ENCODE measurements at regions of chr3 and their contacts with region 1.

Region 1: DNA sequence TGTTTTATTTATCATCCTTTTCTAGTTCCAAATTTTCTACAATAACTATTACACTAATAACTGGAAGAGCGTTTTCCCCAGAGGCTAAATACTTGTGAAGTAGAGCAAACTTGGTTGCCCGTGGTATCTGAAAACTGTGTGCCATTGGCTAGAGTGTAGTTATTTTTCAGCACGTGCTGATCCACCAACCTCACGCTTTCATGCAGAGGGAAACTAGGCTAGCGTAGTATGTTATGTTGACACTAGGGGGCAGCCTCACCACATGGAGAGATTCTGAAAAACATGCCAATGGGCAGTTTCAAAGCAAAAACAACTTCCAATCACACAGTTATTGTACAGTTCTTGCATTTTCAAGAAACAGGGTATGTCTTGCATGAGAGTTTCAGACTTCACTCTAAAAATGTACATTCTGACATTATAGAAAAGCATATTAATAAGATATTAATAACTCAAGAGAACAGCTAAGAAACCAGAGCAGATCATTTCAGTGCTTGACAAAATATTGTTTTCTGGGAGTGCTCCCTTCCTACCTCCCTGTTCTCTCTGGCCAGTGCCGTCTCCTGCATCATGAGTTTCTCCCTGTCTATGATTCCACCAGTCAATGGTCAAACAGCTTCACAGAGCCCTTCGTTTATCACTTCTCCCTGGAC is 39.7 kb downstream of the SPATA12 start:
- DNase-seq: peak in 1 of 2 donors; percentile 72
- ATAC-seq: peak in 7 of 8 donors; percentile 60 to 86 (median 76)
- H3K4me3 ChIP-seq: no peak overlapping the region
- H3K27ac ChIP-seq: no peak overlapping the region
- H3K4me1 ChIP-seq: peaks cover 0 to 8% (median 0%) of the 10 kb centered on the region in 9 donors
- H3K27me3 ChIP-seq: no peaks in the 10 kb centered on the region
- CTCF ChIP-seq: peak; percentile 81 to 95 (median 91)

Region 2: GRCh38 chr3:57164657-57165573 is 64.7 kb after region 1 on chr3 and contains the start of gene IL17RD:
- intact Hi-C with region 1: loop called in 7 of 10 experiments (anchors 5 kb)
- DNase-seq: peak; percentile 83 to 88
- ATAC-seq: peak; percentile 76 to 92 (median 86)
- H3K4me3 ChIP-seq: peak within 1 kb of the TSS; percentile 64 to 95 (median 90)
- H3K27ac ChIP-seq: peak within 1 kb of the TSS in 9 of 10 donors; percentile 14 to 80 (median 63)
- H3K4me1 ChIP-seq: peaks cover 0 to 60% (median 36%) of the 10 kb centered on the region in 9 donors
- H3K27me3 ChIP-seq: peaks cover 0 to 80% (median 0%) of the 10 kb centered on the region in 7 donors
- CTCF ChIP-seq: no peak
- total RNA-seq, gene IL17RD: 3.3 to 15.6 (median 6.0) TPM

Region 3: DNA sequence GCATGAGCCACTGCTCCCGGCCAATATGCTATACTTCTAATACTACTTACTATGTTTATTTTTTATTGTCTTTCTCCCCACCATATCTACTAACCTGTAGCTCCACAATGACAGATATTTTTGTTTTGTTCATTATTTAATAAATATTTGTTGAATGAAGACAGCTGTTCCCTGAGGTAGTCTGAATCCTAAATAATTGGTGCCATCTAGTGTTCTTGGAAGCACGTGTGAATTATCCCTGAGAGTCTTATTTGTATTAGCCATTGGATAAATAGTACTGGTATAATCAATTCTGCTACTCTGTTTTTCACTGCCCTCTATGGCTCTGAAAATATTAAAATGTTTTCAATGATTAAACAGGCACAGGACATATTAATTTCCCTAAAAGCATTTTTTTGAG is 121.7 kb after region 1 on chr3:
- intact Hi-C with region 1: loop called (anchors 2 to 10 kb)
- DNase-seq: no peak
- ATAC-seq: no peak
- H3K4me3 ChIP-seq: no peak overlapping the region
- H3K27ac ChIP-seq: no peak overlapping the region
- H3K4me1 ChIP-seq: peaks cover 0 to 11% (median 5%) of the 10 kb centered on the region in 9 donors
- H3K27me3 ChIP-seq: no peaks in the 10 kb centered on the region
- CTCF ChIP-seq: peak in 8 of 9 donors; percentile 18 to 58 (median 42)

Measured in heart right ventricle (tissue), 16 donors.